ENCODE measurements at regions of chr10 and their contacts with region 1.

Region 1: GRCh38 chr10:87861953-87862678 is 1.2 kb downstream of the KLLN start:
- DNase-seq: peak; percentile 98
- ATAC-seq: peak; percentile 72
- H3K4me3 ChIP-seq: peak overlapping the region; percentile 73
- H3K27ac ChIP-seq: peak overlapping the region; percentile 76
- H3K4me1 ChIP-seq: no peaks in the 10 kb centered on the region
- H3K27me3 ChIP-seq: no peaks in the 10 kb centered on the region
- CTCF ChIP-seq: no peak
- POLR2A ChIP-seq: peak; percentile 18; the same call in 1 of the 2 replicates
- RAD21 ChIP-seq: peak; percentile 2; the same call in 1 of the 2 replicates

Region 2: DNA sequence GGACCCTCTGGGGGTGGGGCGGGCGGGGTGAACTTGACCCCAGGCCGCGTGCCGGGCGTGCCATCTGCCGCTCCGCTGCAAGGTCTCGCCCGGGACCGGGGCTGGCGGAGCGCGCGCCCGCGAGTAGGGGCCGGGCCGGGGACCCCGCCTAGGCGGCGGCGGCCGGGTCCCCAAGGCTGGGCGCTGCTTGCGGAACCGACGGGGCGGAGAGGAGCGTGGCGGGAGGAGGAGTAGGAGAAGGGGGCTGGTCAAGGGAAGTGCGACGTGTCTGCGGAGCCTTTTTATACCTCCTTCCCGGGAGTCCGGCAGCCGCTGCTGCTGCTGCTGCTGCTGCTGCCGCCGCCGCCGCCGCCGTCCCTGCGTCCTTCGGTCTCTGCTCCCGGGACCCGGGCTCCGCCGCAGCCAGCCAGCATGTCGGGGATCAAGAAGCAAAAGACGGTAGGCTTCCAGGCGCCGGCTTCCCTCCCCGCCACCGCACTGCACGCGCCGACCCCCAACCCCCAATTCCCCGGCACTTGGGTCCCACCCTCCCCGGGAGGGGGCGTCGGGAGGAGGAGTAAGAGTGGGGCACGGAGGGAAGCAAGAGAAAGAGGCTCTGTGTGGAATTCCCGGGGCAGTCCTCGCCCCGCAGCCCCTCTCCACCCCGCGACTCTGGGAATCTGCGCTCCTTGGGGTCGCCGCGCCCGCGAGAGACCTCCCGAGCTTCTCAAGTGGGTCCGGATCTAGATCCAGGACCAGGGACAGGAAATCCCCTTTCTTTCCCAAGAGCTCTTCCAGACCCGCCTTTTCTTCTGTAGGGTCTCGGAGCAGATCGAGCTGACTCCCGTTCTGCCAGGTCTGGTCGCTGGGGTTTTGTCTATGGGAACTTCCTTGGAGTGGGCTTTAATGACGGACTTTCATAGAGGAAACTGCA is 202.3 kb before region 1 on chr10 and contains the start of gene PAPSS2:
- CTCF ChIA-PET with region 1: no interaction called
- POLR2A ChIA-PET with region 1: no interaction called
- dilution Hi-C with region 1: no loop called
- in situ Hi-C with region 1: no loop called
- intact Hi-C with region 1: loop called (anchors 2 kb)
- DNase-seq: peak; percentile 68
- ATAC-seq: peak; percentile 71
- H3K4me3 ChIP-seq: peak within 1 kb of the TSS; percentile 98
- H3K27ac ChIP-seq: peak within 1 kb of the TSS; percentile 85
- H3K4me1 ChIP-seq: peaks cover 14% of the 10 kb centered on the region
- H3K27me3 ChIP-seq: no peaks in the 10 kb centered on the region
- CTCF ChIP-seq: no peak
- POLR2A ChIP-seq: peak; percentile 63
- RAD21 ChIP-seq: no peak
- total RNA-seq, gene PAPSS2: 55.0 and 58.6 TPM in 2 replicates

Region 3: GRCh38 chr10:87786421-87786820 is 75.7 kb before region 1 on chr10:
- CTCF ChIA-PET with region 1: no interaction called
- POLR2A ChIA-PET with region 1: no interaction called
- dilution Hi-C with region 1: no loop called
- in situ Hi-C with region 1: no loop called
- intact Hi-C with region 1: no loop called
- DNase-seq: no peak
- ATAC-seq: no peak
- H3K4me3 ChIP-seq: no peak overlapping the region
- H3K27ac ChIP-seq: no peak overlapping the region
- H3K4me1 ChIP-seq: no peaks in the 10 kb centered on the region
- H3K27me3 ChIP-seq: no peaks in the 10 kb centered on the region
- CTCF ChIP-seq: no peak
- POLR2A ChIP-seq: no peak
- RAD21 ChIP-seq: no peak

Region 4: GRCh38 chr10:87961046-87961713 is 99.1 kb after region 1 on chr10:
- CTCF ChIA-PET with region 1: no interaction called
- POLR2A ChIA-PET with region 1: no interaction called
- dilution Hi-C with region 1: no loop called
- in situ Hi-C with region 1: no loop called
- intact Hi-C with region 1: loop called (anchors 5 kb)
- DNase-seq: peak; percentile 78
- ATAC-seq: peak; percentile 66
- H3K4me3 ChIP-seq: no peak overlapping the region
- H3K27ac ChIP-seq: no peak overlapping the region
- H3K4me1 ChIP-seq: no peaks in the 10 kb centered on the region; the same call in 1 of the 2 replicates
- H3K27me3 ChIP-seq: no peaks in the 10 kb centered on the region
- CTCF ChIP-seq: no peak
- POLR2A ChIP-seq: no peak
- RAD21 ChIP-seq: no peak

Region 5: GRCh38 chr10:88114368-88114767 is 252.3 kb after region 1 on chr10:
- CTCF ChIA-PET with region 1: no interaction called
- POLR2A ChIA-PET with region 1: no interaction called
- dilution Hi-C with region 1: no loop called
- in situ Hi-C with region 1: no loop called
- intact Hi-C with region 1: loop called (anchors 5 kb)
- DNase-seq: peak; percentile 25
- ATAC-seq: no peak
- H3K4me3 ChIP-seq: no peak overlapping the region
- H3K27ac ChIP-seq: no peak overlapping the region
- H3K4me1 ChIP-seq: peaks cover 23% of the 10 kb centered on the region
- H3K27me3 ChIP-seq: no peaks in the 10 kb centered on the region
- CTCF ChIP-seq: peak; percentile 34
- POLR2A ChIP-seq: no peak
- RAD21 ChIP-seq: peak; percentile 48

Region 6: DNA sequence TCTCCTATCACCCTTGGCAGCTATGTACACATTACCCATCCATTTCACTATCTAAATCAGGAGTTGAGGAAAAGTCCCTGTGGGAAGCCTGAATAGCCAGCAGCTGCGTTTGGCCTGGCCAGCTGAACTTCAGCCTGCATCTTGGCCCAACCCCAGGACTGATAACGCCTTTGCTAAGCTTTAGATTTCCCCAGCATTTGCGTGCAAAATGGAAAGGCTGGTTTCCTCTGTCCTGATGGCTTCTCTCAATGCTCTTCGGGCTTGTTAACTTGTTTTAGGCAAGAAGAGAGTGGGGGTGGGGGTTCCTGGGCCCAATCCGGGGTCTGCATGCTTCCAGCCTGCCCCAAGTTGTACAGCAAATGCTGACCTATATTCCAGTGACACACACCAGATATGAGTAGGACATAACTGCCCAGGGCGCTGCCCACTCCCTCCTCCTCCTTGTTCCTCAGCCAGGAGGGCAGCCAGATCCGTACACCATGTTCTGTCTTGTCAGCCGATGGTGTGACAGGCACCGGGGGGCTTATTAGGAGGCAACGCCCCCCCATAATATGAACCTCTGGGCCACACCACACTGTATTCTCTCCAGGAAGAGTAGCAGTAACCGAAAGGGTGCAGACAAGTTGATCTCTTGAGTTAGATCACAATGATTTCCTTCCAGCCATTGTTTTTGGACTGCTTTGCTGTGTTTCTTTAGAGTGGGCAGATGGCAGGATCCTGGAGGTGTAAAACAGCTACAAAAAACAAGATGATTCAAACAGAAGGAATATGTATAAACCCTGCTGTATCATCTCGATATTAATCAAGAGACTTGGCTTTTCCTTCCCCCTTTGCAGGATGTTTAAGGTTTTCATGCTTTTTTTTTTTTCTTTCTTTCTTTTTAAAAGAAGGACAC is 382.0 kb after region 1 on chr10:
- CTCF ChIA-PET with region 1: no interaction called
- POLR2A ChIA-PET with region 1: no interaction called
- dilution Hi-C with region 1: no loop called
- in situ Hi-C with region 1: no loop called
- intact Hi-C with region 1: loop called (anchors 10 kb)
- DNase-seq: peak; percentile 87
- ATAC-seq: peak; percentile 83
- H3K4me3 ChIP-seq: no peak overlapping the region
- H3K27ac ChIP-seq: peak overlapping the region; percentile 4; the same call in 1 of the 2 replicates
- H3K4me1 ChIP-seq: peaks cover 5% of the 10 kb centered on the region
- H3K27me3 ChIP-seq: no peaks in the 10 kb centered on the region
- CTCF ChIP-seq: no peak
- POLR2A ChIP-seq: no peak
- RAD21 ChIP-seq: no peak

Region 7: DNA sequence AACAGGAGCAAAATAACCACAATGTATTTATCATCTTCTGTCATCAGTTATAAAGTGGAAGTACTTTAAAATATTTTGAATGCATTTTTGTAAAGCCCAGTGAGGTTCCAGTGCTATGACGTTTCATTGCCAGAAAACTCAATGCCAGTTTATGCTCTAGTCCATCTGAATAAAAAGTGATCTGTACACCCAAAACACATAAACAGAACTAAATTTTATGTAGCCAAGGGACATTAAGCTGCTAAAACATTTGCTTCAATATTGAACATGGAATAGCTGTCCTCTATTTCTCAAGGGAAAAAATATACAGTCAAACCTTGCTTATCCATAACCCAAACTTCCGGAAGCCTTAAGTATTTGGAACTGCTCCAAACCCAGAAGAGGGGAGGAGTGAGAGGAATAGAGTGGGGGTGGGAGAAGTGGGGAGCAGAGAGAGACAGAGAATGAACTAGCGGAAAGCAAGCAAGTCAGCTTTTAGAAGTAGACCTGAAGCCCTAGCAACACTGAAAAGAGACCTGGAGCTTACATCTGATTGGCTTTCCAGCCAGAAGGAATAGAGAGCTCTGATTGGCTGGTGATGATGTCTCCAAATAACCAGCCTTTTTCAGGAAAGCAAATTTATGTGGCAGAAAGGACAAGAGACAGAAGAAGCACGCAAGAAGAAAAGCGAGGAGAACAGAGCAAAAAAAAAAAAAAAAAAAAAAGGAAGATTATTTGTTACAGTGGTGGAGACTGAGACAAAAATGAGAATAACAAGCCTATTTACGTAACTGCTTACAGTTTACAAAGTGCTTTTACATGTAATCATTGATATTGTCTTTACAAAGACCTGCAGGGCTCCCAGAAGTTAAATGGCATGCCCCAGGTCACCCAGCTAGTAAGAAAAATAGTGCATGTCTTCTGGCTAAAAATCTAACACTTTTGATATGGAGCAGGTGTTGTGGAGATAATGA is 525.0 kb after region 1 on chr10:
- CTCF ChIA-PET with region 1: interaction called, 4 read pairs
- POLR2A ChIA-PET with region 1: interaction called, 3 read pairs
- dilution Hi-C with region 1: no loop called
- in situ Hi-C with region 1: loop called (anchors 5 kb)
- intact Hi-C with region 1: loop called (anchors 1 kb)
- DNase-seq: peak; percentile 82
- ATAC-seq: peak; percentile 91
- H3K4me3 ChIP-seq: no peak overlapping the region
- H3K27ac ChIP-seq: no peak overlapping the region; the same call in 1 of the 2 replicates
- H3K4me1 ChIP-seq: peaks cover 2% of the 10 kb centered on the region; the same call in 1 of the 2 replicates
- H3K27me3 ChIP-seq: no peaks in the 10 kb centered on the region
- CTCF ChIP-seq: no peak
- POLR2A ChIP-seq: no peak
- RAD21 ChIP-seq: no peak

Measured in IMR-90 (cell line).